GM18951 (cell line): ENCODE measurements at regions of chr3 and their contacts with region 1.

Region 1: GRCh38 chr3:190701096-190701532 is 161.4 kb downstream of the GMNC start:
- POLR2A ChIP-seq: no peak

Region 2: GRCh38 chr3:189961525-189962161 is 739.5 kb before region 1 on chr3:
- in situ Hi-C with region 1: loop called (anchors 25 kb)
- POLR2A ChIP-seq: no peak

Region 3: GRCh38 chr3:191688756-191689433 is 987.8 kb after region 1 on chr3:
- in situ Hi-C with region 1: no loop called
- POLR2A ChIP-seq: no peak